ENCODE measurements at regions of chr22 and their contacts with region 1.

Region 1: DNA sequence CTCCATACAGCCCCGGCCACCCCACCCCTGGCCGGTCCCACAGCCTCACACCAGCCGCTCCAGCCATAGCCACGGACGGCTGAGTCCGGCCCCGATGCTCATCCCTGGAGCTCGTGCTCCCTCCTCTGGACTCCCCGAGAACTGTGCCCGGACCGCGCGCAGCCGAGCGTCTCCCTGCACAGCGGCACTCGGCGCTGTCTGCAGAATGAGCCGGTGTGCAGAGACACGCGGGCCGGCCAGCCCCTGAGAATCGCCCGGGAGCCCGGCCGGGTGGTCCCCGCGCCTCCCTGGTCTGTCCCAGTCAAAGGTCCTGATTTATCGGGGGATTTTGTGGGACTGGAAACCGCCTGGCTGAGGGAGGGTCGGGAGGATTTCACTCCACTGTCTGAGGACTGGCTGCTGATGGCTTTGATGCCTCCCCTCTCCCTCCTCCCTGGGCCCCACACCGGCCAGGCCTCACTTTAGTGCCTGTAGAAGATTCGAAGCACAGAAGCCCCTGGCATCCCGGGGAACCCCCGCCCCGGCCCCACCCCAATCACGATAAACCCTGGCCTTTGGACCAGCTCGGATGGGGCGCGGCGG is 102.7 kb downstream of the BRD1 start:
- DNase-seq: peak; percentile 70
- H3K4me3 ChIP-seq: peak overlapping the region; percentile 57
- H3K27ac ChIP-seq: no peak overlapping the region
- H3K4me1 ChIP-seq: peaks cover 17% of the 10 kb centered on the region
- CTCF ChIP-seq: peak; percentile 76

Region 2: GRCh38 chr22:49046546-49047361 is 678.2 kb before region 1 on chr22:
- CTCF ChIA-PET with region 1: no interaction called
- POLR2A ChIA-PET with region 1: no interaction called
- intact Hi-C with region 1: loop called (anchors 2 kb)
- DNase-seq: peak; percentile 70
- H3K4me3 ChIP-seq: no peak overlapping the region
- H3K27ac ChIP-seq: no peak overlapping the region
- H3K4me1 ChIP-seq: no peaks in the 10 kb centered on the region
- CTCF ChIP-seq: peak; percentile 77

Region 3: DNA sequence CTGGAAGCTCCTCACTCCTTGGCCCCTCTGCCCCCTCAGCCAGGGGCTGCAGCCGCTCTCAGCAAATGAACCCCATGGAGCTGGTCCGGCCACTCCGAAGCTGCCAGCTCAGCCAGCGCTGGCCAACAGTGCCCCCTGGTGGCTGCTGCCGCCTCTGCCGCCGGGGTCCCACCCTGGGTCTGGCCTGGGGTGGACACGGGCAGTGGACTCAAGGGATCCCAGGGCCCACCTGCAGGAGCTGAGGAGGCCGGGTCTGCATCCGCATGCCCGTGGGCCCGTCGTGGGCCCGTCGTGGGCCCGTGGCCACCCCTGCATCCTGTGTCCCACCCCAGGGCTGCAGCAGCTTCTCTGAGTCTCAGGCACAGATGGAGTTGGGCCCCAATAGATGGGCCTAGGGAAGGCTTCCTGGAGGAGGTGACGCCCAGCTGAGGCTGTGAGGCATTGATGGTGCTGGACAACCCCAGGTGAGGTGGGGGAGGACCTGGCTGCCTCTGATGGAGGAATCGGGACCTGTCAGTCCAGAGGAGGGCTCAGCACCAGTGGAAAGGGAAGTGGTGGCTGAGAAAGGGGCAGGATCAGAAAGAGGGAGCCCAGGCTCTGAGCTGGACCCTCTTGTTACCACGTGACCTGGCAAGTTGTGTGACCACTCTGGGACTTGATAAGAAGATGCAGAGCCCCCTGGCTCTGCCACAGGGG is 419.6 kb before region 1 on chr22:
- CTCF ChIA-PET with region 1: no interaction called
- POLR2A ChIA-PET with region 1: no interaction called
- intact Hi-C with region 1: loop called (anchors 10 kb)
- DNase-seq: peak; percentile 67
- H3K4me3 ChIP-seq: no peak overlapping the region
- H3K27ac ChIP-seq: no peak overlapping the region
- H3K4me1 ChIP-seq: peaks cover 31% of the 10 kb centered on the region
- CTCF ChIP-seq: peak; percentile 95

Region 4: GRCh38 chr22:49749885-49750772 is 25.1 kb after region 1 on chr22:
- CTCF ChIA-PET with region 1: no interaction called
- POLR2A ChIA-PET with region 1: no interaction called
- intact Hi-C with region 1: no loop called
- DNase-seq: no peak
- H3K4me3 ChIP-seq: no peak overlapping the region
- H3K27ac ChIP-seq: no peak overlapping the region
- H3K4me1 ChIP-seq: no peaks in the 10 kb centered on the region
- CTCF ChIP-seq: no peak

Region 5: DNA sequence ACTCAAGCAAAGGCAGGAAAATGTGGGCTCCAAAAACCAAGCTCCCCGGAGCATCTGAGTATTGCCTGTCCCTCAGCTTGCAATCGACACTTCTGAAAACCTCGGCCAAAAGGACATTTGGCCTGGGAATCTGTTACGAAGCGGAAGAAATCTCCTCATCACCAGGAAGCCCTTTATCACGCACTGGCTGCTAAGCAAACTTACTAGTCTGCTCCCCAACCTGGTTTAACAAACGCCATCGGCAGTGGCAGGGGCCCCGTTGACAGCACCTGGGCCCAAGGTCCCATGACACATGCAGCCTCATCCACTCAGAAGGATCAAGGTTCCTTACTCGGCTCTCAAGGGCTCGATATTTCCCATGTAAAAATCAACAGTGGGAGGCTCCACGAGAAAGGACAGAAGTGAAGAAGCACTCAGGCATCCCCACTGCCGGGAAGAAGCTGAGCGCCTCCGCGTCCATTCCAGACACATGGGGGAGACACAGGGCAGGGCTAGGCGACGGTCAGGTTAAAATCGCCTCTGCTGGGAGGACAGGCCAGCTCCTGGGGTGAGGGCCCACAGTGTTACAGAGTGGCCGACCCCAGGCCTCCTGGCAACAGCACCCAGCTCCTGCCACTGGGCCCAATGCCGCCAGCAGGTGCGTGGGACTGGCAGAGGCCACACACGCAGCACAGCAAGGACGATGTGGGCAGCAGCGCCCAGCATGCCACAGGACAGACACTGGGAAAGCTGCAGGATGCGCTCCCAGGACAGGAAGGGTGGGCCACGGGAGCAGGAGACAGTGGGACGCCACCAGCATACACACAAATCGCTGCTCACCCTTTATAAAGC is 75.6 kb after region 1 on chr22:
- CTCF ChIA-PET with region 1: no interaction called
- POLR2A ChIA-PET with region 1: no interaction called
- intact Hi-C with region 1: no loop called
- DNase-seq: no peak
- H3K4me3 ChIP-seq: no peak overlapping the region
- H3K27ac ChIP-seq: no peak overlapping the region
- H3K4me1 ChIP-seq: no peaks in the 10 kb centered on the region
- CTCF ChIP-seq: no peak

Region 6: DNA sequence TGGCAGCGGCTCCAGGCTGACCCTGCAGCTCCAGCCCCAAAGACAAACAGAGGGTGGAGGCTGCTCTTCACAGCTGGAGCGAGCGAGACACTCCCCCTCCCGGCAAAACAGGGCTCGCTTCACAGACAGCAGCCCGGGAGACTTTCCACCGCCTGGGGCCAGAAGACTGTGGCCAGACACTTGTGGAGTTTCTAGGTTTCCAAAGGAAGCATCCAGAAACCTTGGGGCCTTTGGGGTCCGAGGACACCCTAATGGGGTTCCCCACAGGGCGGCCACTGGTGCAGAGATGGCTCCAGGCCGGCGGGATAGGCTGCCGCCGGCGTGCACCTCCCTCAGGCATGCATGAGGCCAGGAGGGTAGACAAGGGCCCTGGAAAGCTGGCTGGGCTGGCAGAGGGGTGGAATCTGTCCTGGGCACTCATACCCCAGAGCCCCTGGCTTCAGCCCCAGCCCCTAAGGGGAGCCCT is 287.8 kb after region 1 on chr22 and contains the start of gene IL17REL:
- CTCF ChIA-PET with region 1: no interaction called
- POLR2A ChIA-PET with region 1: no interaction called
- intact Hi-C with region 1: no loop called
- DNase-seq: no peak
- H3K4me3 ChIP-seq: no peak within 1 kb of the TSS
- H3K27ac ChIP-seq: no peak within 1 kb of the TSS
- H3K4me1 ChIP-seq: peaks cover 7% of the 10 kb centered on the region
- CTCF ChIP-seq: no peak
- total RNA-seq, gene IL17REL: 0.03 TPM in 1 of 2 replicates, not detected in the other